Activated CD4-positive, alpha-beta T cell treated with anti-CD3 and anti-CD28 coated beads, Interleukin-2, amount 10 ng/mL, durations not matched to agents 24 days and 14 days (primary cell): ENCODE measurements at regions of chr6 and their contacts with region 1.

Region 1: DNA sequence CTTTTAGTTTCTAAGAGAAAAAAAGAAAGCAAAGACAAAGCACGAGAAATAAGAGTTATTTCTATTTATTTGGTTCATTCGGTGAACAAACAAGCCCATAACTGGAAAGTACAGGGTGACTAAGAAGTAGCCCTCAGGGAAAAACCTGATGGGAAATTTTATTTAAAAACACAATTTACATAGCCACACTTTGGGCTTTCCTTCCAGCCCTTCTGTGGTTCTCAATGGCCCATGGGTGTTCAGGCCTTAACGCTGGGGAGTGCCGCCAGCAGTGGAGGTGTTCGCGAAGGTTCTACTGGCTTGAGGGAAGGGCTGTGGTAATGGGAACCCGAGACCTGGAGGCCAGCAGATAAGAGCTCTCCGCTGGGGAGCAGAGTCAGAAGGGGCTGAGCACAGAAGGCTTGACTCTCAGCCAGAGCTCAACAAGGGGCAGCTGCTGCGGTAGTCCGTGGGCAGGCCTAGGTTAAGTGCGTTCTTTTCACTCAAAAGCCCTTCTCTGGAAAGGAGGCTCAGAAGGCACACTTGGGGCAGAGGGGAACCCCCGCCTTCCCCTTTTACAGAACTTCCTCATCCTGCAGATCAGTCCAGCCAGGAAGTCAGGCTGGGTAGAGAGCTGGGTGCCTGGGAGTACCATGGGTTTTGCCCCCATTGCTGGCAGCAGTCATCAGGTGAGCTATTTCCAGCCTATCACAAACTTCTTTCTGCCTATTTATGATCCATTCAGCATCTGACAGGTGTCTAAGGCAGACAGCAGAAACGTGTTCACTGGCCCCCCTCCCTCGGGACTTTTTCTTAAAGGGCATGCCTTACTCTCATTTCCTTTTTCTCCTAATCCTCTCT is 8.8 kb upstream of the CD83 start:
- DNase-seq: peak; percentile 66
- H3K4me3 Mint-ChIP-seq: peak overlapping the region; percentile 74
- H3K27ac Mint-ChIP-seq: peak overlapping the region; percentile 90
- H3K4me1 Mint-ChIP-seq: peaks cover 28% of the 10 kb centered on the region
- H3K27me3 Mint-ChIP-seq: peaks cover 10% of the 10 kb centered on the region

Region 2: GRCh38 chr6:14094721-14095120 is 14.1 kb before region 1 on chr6:
- intact Hi-C with region 1: loop called (anchors 1 kb)
- DNase-seq: no peak
- H3K4me3 Mint-ChIP-seq: no peak overlapping the region
- H3K27ac Mint-ChIP-seq: peak overlapping the region; percentile 79
- H3K4me1 Mint-ChIP-seq: peaks cover 41% of the 10 kb centered on the region
- H3K27me3 Mint-ChIP-seq: no peaks in the 10 kb centered on the region

Region 3: DNA sequence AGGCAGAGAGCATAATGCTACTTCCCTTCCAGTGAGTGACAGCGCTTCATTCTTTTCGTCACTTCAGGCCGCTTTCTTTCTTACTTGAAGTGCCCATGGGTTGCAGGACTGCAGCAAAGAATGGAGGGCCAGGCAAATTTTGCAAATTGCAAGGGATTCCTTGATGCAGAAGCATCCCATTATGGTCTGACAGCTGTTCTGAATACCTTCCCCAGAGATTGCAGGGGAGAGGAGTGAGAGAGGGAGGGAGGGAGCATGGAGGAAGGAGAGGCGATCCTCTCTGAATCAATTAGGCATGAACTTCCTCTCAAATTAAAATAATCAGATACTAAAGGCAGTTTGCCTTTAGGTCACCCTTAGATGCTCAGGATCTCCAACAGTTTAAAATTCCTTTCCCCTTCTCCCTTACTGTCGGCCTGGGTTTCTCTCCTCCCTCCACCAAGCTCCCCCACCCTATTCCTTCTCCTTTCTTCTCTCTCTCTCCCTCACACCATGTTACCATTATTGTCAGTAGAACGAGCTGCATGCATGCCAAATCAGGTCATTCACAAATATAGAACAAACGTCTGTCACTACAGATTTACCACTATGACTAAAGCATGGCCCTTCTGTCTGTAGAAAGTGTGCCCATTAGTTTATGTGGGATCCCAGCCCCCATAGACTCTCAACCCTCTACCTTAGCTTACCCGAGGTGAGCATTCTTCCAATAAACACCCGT is 298.0 kb after region 1 on chr6:
- intact Hi-C with region 1: no loop called
- DNase-seq: no peak
- H3K4me3 Mint-ChIP-seq: no peak overlapping the region
- H3K27ac Mint-ChIP-seq: no peak overlapping the region
- H3K4me1 Mint-ChIP-seq: peaks cover 5% of the 10 kb centered on the region
- H3K27me3 Mint-ChIP-seq: peaks cover 2% of the 10 kb centered on the region

Region 4: DNA sequence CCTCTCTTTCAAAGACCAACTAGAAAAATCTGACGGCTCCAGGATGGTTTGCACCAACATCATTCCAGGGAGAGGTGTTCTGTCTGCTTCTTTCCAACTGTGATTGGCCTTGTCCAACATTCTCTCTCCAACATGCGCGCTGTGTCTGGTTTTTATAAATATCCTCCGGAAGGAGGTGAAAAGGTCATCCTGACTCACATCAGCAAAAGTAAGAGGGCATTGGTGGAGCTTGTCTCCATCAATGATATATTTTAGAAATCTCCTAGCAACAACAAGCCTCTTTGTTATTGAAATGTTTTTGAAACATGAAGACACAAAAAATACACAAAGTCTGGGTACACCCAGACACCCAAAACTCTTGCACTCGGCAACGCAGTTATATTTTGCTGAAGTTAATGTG is 661.8 kb after region 1 on chr6:
- intact Hi-C with region 1: no loop called
- DNase-seq: no peak
- H3K4me3 Mint-ChIP-seq: no peak overlapping the region
- H3K27ac Mint-ChIP-seq: no peak overlapping the region
- H3K4me1 Mint-ChIP-seq: peaks cover 4% of the 10 kb centered on the region
- H3K27me3 Mint-ChIP-seq: no peaks in the 10 kb centered on the region